Activated CD8-positive, alpha-beta memory T cell treated with anti-CD3 and anti-CD28 coated beads, Interleukin-2, amount 10 ng/mL, durations not matched to agents 7 days and 5 days (primary cell): ENCODE measurements at regions of chr19 and their contacts with region 1.

Region 1: GRCh38 chr19:45886427-45887199 is 672 bp upstream of the IRF2BP1 start:
- DNase-seq: peak; percentile 97
- ATAC-seq: peak; percentile 85
- H3K4me3 Mint-ChIP-seq: peak overlapping the region; percentile 88
- H3K27ac Mint-ChIP-seq: peak overlapping the region; percentile 96
- H3K4me1 Mint-ChIP-seq: peaks cover 20% of the 10 kb centered on the region
- H3K27me3 Mint-ChIP-seq: no peaks in the 10 kb centered on the region

Region 2: GRCh38 chr19:45862564-45863334 is 23.9 kb before region 1 on chr19 and contains the start of gene SYMPK:
- CTCF ChIA-PET with region 1: interaction called, 117 read pairs
- DNase-seq: peak; percentile 100
- ATAC-seq: peak; percentile 96
- H3K4me3 Mint-ChIP-seq: peak within 1 kb of the TSS; percentile 98
- H3K27ac Mint-ChIP-seq: peak within 1 kb of the TSS; percentile 99
- H3K4me1 Mint-ChIP-seq: peaks cover 36% of the 10 kb centered on the region
- H3K27me3 Mint-ChIP-seq: peaks cover 34% of the 10 kb centered on the region
- total RNA-seq, gene SYMPK: 119 to 125 TPM

Region 3: GRCh38 chr19:45876411-45877197 is 10.0 kb before region 1 on chr19:
- CTCF ChIA-PET with region 1: no interaction called
- DNase-seq: no peak
- ATAC-seq: peak; percentile 31
- H3K4me3 Mint-ChIP-seq: no peak overlapping the region
- H3K27ac Mint-ChIP-seq: no peak overlapping the region
- H3K4me1 Mint-ChIP-seq: peaks cover 23% of the 10 kb centered on the region
- H3K27me3 Mint-ChIP-seq: peaks cover 17% of the 10 kb centered on the region